ENCODE measurements at regions of chr22 and their contacts with region 1.

Region 1: DNA sequence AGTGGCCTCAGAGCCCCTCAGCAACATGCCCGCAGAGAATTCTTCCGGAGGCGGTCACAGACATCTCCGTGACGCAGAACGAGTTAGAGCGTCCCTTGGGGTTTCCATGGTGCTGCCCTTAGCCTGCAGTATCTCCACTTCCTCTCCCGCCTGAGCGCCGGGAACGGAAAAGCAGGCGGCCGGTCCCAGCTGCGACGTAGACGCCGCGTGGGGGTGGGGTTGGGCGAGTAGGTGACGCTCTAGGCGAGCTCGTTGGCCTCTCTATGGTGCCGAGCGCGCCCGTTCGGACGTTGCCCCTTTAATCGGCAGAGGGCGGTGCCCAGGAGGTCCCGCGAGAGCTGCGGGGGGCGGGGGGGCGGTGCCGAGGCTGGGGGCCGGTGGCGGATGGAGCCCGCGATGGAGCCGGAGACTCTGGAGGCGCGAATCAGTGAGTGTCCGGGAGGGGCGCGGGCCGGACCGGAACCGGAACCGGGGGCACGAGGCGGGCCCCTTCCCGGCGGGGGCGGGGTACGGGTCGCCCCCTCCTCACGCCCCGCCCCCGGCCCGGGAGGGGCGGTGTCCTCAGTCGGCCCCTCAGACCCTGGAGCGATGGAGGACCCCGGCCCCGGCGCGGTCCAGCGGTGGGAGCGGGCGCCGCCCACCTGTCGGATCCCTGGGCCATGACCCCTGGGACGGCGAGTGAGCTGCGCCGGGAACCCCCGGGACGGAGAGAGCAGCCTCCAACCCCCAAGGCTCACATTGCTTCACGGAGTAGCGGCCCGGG is at the start of gene GGA1:
- DNase-seq: peak; percentile 94 to 98 (median 97)
- H3K4me3 ChIP-seq: peak within 1 kb of the TSS; percentile 76
- H3K4me3 Mint-ChIP-seq: peak within 1 kb of the TSS; percentile 89 to 98 (median 94)
- H3K27ac ChIP-seq: peak within 1 kb of the TSS; percentile 86
- H3K27ac Mint-ChIP-seq: peak within 1 kb of the TSS; percentile 92 to 99 (median 96)
- H3K4me1 ChIP-seq: peaks cover 67% of the 10 kb centered on the region
- H3K4me1 Mint-ChIP-seq: peaks cover 43 to 66% (median 45%) of the 10 kb centered on the region in 3 donors
- H3K27me3 ChIP-seq: no peaks in the 10 kb centered on the region
- H3K27me3 Mint-ChIP-seq: no peaks in the 10 kb centered on the region
- total RNA-seq, gene GGA1: 69.1 to 74.3 TPM

Region 2: GRCh38 chr22:37566903-37567820 is 41.5 kb before region 1 on chr22:
- CTCF ChIA-PET with region 1: interaction called, 21 read pairs
- POLR2A ChIA-PET with region 1: interaction called, 3 read pairs
- DNase-seq: peak; percentile 82 to 92 (median 88)
- H3K4me3 ChIP-seq: peak overlapping the region; percentile 28
- H3K4me3 Mint-ChIP-seq: peak overlapping the region; percentile 55 to 88 (median 75)
- H3K27ac ChIP-seq: no peak overlapping the region
- H3K27ac Mint-ChIP-seq: peak overlapping the region in 6 of 8 donors; percentile 37 to 84 (median 78)
- H3K4me1 ChIP-seq: peaks cover 26% of the 10 kb centered on the region
- H3K4me1 Mint-ChIP-seq: peaks cover 19 to 29% (median 20%) of the 10 kb centered on the region in 3 donors
- H3K27me3 ChIP-seq: peaks cover 11% of the 10 kb centered on the region
- H3K27me3 Mint-ChIP-seq: peaks cover 28 to 32% of the 10 kb centered on the region in 2 donors

Region 3: GRCh38 chr22:37623075-37624016 is 14.7 kb after region 1 on chr22:
- CTCF ChIA-PET with region 1: interaction called, 22 read pairs
- POLR2A ChIA-PET with region 1: interaction called, 9 read pairs
- DNase-seq: peak; percentile 69 to 85 (median 70)
- H3K4me3 ChIP-seq: no peak overlapping the region
- H3K4me3 Mint-ChIP-seq: peak overlapping the region in 6 of 7 donors; percentile 35 to 87 (median 63)
- H3K27ac ChIP-seq: no peak overlapping the region
- H3K27ac Mint-ChIP-seq: peak overlapping the region; percentile 90 to 98 (median 96)
- H3K4me1 ChIP-seq: peaks cover 52% of the 10 kb centered on the region
- H3K4me1 Mint-ChIP-seq: peaks cover 33 to 52% (median 37%) of the 10 kb centered on the region in 3 donors
- H3K27me3 ChIP-seq: no peaks in the 10 kb centered on the region
- H3K27me3 Mint-ChIP-seq: no peaks in the 10 kb centered on the region

Region 4: GRCh38 chr22:37643225-37643847 is 34.7 kb after region 1 on chr22:
- CTCF ChIA-PET with region 1: interaction called, 54 read pairs
- POLR2A ChIA-PET with region 1: interaction called, 7 read pairs
- DNase-seq: peak; percentile 68 to 87 (median 82)
- H3K4me3 ChIP-seq: peak overlapping the region; percentile 14
- H3K4me3 Mint-ChIP-seq: peak overlapping the region; percentile 37 to 85 (median 68)
- H3K27ac ChIP-seq: no peak overlapping the region
- H3K27ac Mint-ChIP-seq: peak overlapping the region; percentile 62 to 88 (median 84)
- H3K4me1 ChIP-seq: peaks cover 37% of the 10 kb centered on the region
- H3K4me1 Mint-ChIP-seq: peaks cover 27 to 59% (median 33%) of the 10 kb centered on the region in 3 donors
- H3K27me3 ChIP-seq: no peaks in the 10 kb centered on the region
- H3K27me3 Mint-ChIP-seq: no peaks in the 10 kb centered on the region

Region 5: GRCh38 chr22:37676736-37677492 is 68.3 kb after region 1 on chr22:
- CTCF ChIA-PET with region 1: interaction called, 38 read pairs
- POLR2A ChIA-PET with region 1: interaction called, 11 read pairs
- DNase-seq: peak; percentile 88 to 96 (median 91)
- H3K4me3 ChIP-seq: peak overlapping the region; percentile 68
- H3K4me3 Mint-ChIP-seq: peak overlapping the region; percentile 85 to 97 (median 89)
- H3K27ac ChIP-seq: peak overlapping the region; percentile 83
- H3K27ac Mint-ChIP-seq: peak overlapping the region; percentile 93 to 100 (median 99)
- H3K4me1 ChIP-seq: peaks cover 45% of the 10 kb centered on the region
- H3K4me1 Mint-ChIP-seq: peaks cover 44 to 69% (median 45%) of the 10 kb centered on the region in 3 donors
- H3K27me3 ChIP-seq: no peaks in the 10 kb centered on the region
- H3K27me3 Mint-ChIP-seq: no peaks in the 10 kb centered on the region

Region 6: DNA sequence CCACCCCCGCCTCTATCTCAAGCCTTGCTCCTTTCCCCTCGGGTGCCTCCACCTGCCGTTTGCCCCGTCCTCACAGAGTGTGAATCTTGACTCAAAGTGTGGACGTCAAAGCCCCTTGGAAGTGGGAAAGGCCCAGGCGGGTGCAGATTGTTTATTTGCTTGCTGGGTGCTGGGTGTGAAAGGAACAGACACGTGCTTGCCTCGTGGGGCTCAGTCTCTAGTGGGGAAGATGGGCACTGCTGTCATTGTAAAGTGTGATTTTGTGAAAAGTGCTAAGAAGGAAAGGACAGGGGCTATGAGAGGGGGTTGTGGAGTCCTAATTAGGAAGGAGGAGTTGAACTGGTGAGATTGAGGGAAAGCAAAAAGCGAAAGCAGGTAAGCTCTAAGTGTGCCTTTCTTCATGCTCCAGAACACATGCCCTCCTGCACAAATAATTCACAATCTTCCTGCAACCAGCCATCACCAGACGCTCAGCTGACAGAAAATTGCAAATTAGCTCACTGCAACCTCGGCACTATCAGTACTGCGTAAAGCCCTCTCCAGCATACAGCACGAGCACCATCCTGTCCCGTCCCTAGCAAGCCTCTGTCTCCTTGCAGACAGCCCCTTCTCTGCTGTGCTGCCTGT is 189.3 kb after region 1 on chr22:
- CTCF ChIA-PET with region 1: no interaction called
- POLR2A ChIA-PET with region 1: no interaction called
- DNase-seq: no peak
- H3K4me3 ChIP-seq: no peak overlapping the region
- H3K4me3 Mint-ChIP-seq: no peak overlapping the region
- H3K27ac ChIP-seq: no peak overlapping the region
- H3K27ac Mint-ChIP-seq: no peak overlapping the region
- H3K4me1 ChIP-seq: peaks cover 6% of the 10 kb centered on the region
- H3K4me1 Mint-ChIP-seq: peaks cover 6 to 8% (median 8%) of the 10 kb centered on the region in 3 donors
- H3K27me3 ChIP-seq: no peaks in the 10 kb centered on the region
- H3K27me3 Mint-ChIP-seq: peaks cover 12 to 14% of the 10 kb centered on the region in 2 donors

Region 7: DNA sequence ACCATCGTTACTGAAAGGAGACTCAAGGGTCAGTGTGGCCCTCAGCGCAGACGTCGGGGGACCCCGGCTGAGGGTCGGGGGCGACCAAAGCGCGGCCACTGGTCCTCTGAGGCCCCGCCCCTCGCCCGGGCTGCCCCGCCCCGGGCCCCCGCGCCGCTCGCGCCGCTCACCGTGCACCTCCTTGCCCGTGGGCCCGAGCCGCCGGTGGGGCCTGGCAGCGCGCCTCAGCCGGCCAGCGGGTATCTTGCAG is 235.0 kb after region 1 on chr22:
- CTCF ChIA-PET with region 1: no interaction called
- POLR2A ChIA-PET with region 1: no interaction called
- DNase-seq: peak in 2 of 5 donors; percentile 28 to 73
- H3K4me3 ChIP-seq: peak overlapping the region; percentile 72
- H3K4me3 Mint-ChIP-seq: peak overlapping the region; percentile 87 to 95 (median 89)
- H3K27ac ChIP-seq: peak overlapping the region; percentile 87
- H3K27ac Mint-ChIP-seq: peak overlapping the region; percentile 74 to 93 (median 90)
- H3K4me1 ChIP-seq: peaks cover 20% of the 10 kb centered on the region
- H3K4me1 Mint-ChIP-seq: peaks cover 18 to 31% (median 18%) of the 10 kb centered on the region in 3 donors
- H3K27me3 ChIP-seq: no peaks in the 10 kb centered on the region
- H3K27me3 Mint-ChIP-seq: no peaks in the 10 kb centered on the region

Region 8: DNA sequence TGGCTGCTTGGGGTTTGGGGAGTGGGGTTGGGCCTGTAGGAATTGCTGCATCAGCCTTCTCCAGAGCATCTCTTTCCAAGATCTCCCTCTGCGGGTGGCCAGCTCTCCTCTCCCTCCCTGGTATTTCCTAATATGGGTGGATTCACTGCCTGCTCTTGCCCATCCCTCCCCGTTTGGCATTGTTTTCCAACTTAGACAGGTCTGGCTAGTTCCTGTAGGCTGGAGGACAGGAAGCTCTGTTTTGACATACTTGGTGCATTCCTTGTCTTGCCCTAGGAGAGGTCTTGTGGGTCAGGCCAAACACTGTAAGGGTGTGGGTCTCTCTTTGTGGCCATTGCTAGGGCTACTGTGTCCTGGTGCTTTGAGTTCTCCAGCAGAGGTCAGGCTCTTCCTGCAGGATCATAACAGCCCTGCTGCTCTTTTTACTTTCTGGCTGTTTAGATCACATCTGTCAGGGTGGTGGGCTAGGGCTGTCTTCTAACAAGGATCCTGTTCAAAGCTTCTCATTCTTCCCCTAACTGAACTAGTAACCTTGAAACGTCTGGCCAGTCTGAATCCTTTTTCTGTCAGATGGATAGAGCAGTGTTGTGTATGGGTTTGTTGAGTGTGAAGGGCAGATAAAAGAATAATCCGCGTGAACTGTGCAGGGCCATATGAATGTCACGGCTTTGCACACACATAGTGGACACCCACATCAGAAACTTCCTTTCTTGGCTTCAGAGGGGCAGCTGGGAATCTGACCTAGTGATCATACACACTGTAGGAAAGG is 279.1 kb after region 1 on chr22:
- CTCF ChIA-PET with region 1: no interaction called
- POLR2A ChIA-PET with region 1: no interaction called
- DNase-seq: no peak
- H3K4me3 ChIP-seq: no peak overlapping the region
- H3K4me3 Mint-ChIP-seq: no peak overlapping the region
- H3K27ac ChIP-seq: no peak overlapping the region
- H3K27ac Mint-ChIP-seq: peak overlapping the region in 6 of 8 donors; percentile 12 to 83 (median 60)
- H3K4me1 ChIP-seq: no peaks in the 10 kb centered on the region
- H3K4me1 Mint-ChIP-seq: peaks cover 9 to 18% (median 11%) of the 10 kb centered on the region in 3 donors
- H3K27me3 ChIP-seq: no peaks in the 10 kb centered on the region
- H3K27me3 Mint-ChIP-seq: no peaks in the 10 kb centered on the region

Measured in CD8-positive, alpha-beta memory T cell (primary cell).